WTC11 (cell line): ENCODE measurements at regions of chr12 and their contacts with region 1.

Region 1: GRCh38 chr12:47837190-47838171 is 17.8 kb upstream of the HDAC7 start:
- DNase-seq: peak; percentile 75
- ATAC-seq: peak; percentile 61
- H3K4me3 Mint-ChIP-seq: no peak overlapping the region
- H3K27ac Mint-ChIP-seq: no peak overlapping the region
- H3K4me1 Mint-ChIP-seq: peaks cover 19% of the 10 kb centered on the region
- H3K27me3 Mint-ChIP-seq: no peaks in the 10 kb centered on the region
- CTCF ChIP-seq: peak; percentile 96

Region 2: GRCh38 chr12:47576289-47576945 is 261.1 kb before region 1 on chr12:
- CTCF ChIA-PET with region 1: no interaction called
- POLR2A ChIA-PET with region 1: no interaction called
- DNase-seq: peak; percentile 39
- ATAC-seq: peak; percentile 63
- H3K4me3 Mint-ChIP-seq: no peak overlapping the region
- H3K27ac Mint-ChIP-seq: no peak overlapping the region
- H3K4me1 Mint-ChIP-seq: no peaks in the 10 kb centered on the region
- H3K27me3 Mint-ChIP-seq: no peaks in the 10 kb centered on the region
- CTCF ChIP-seq: no peak

Region 3: DNA sequence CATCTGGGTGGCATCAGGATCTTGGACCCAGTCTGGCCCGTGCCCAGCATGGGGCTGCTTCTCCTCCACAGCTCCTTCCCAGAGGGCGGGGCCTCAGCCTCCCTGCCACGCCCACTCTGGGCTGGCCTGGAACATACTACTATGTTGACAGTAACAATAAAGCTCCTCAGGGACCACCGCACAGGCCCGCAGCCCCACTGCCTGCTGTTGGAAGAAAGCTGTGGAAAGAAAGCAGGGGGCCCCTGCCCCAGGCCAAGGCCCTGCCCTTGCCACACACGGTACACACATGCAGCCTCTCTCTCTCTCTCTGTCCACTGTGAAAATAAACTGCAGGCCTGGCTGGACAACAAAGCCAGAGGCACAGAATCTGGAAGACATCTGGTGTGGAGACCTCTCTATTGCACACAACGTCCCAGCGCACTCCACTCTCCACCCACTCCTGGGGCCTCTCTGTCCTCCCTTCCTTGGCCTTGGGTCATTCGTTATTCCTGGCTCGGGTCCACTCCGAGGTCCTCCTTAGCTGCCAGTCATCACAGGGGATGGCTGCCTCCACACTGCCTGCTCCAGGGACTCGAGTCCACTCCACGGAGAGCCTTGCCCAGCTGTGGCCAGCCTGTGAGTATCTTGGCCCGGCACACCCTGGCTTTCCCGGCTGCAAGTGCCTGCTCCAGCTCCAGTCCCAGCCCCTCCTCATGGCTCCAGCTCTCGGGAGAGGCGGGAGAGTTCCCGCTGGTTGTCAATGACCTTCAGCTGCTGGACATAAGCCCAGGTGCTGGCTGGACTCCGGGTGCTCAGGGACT is 100.4 kb before region 1 on chr12:
- CTCF ChIA-PET with region 1: interaction called, 153 read pairs
- POLR2A ChIA-PET with region 1: no interaction called
- DNase-seq: peak; percentile 38
- ATAC-seq: peak; percentile 8; the same call in 1 of the 2 replicates
- H3K4me3 Mint-ChIP-seq: no peak overlapping the region
- H3K27ac Mint-ChIP-seq: no peak overlapping the region
- H3K4me1 Mint-ChIP-seq: peaks cover 26% of the 10 kb centered on the region
- H3K27me3 Mint-ChIP-seq: peaks cover 6% of the 10 kb centered on the region; the same call in 1 of the 2 replicates
- CTCF ChIP-seq: no peak

Region 4: GRCh38 chr12:47758834-47759690 is 78.4 kb before region 1 on chr12 and contains the start of gene RAPGEF3:
- CTCF ChIA-PET with region 1: interaction called, 41 read pairs
- POLR2A ChIA-PET with region 1: interaction called, 4 read pairs
- DNase-seq: peak; percentile 74
- ATAC-seq: peak; percentile 79
- H3K4me3 Mint-ChIP-seq: peak within 1 kb of the TSS; percentile 67
- H3K27ac Mint-ChIP-seq: no peak within 1 kb of the TSS
- H3K4me1 Mint-ChIP-seq: peaks cover 53% of the 10 kb centered on the region
- H3K27me3 Mint-ChIP-seq: no peaks in the 10 kb centered on the region; the same call in 1 of the 2 replicates
- CTCF ChIP-seq: no peak; the same call in 1 of the 2 replicates
- total RNA-seq, gene RAPGEF3: 9.0 to 13.3 TPM (median 9.7 TPM) in 3 replicates

Region 5: DNA sequence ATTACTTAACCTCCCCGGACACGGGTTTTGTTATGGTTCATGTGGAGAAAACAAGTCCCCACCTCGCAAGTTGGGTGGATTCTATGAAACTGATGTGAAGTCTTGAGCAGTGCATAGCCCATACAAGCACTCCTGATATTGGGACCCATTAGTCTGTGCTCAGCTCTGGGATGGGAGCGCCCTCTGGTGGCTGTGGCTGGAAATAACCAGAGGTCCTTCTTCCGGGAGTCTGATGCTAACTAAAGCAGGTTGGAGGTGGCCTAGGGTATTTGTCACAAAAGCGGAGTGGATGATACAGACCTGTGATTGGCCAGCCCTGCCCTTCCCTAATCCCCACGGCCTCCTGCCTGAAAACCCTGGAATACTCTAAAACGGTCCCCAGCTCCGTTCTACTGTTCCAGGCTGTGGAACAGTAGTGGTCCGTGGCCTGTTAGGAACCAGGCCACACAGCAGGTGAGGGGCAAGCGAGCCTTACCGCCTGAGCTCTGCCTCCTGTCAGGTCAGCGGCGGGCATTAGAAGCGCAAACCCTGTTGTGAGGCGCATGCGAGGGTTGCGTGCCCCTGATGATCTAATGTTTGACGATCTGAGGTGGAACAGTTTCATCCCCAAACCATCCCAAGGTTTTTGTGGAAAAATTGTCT is 58.1 kb before region 1 on chr12:
- CTCF ChIA-PET with region 1: interaction called, 110 read pairs
- POLR2A ChIA-PET with region 1: no interaction called
- DNase-seq: peak; percentile 97
- ATAC-seq: peak; percentile 85
- H3K4me3 Mint-ChIP-seq: peak overlapping the region; percentile 44
- H3K27ac Mint-ChIP-seq: peak overlapping the region; percentile 37; the same call in 1 of the 2 replicates
- H3K4me1 Mint-ChIP-seq: peaks cover 32% of the 10 kb centered on the region
- H3K27me3 Mint-ChIP-seq: peaks cover 11% of the 10 kb centered on the region
- CTCF ChIP-seq: peak; percentile 93

Region 6: DNA sequence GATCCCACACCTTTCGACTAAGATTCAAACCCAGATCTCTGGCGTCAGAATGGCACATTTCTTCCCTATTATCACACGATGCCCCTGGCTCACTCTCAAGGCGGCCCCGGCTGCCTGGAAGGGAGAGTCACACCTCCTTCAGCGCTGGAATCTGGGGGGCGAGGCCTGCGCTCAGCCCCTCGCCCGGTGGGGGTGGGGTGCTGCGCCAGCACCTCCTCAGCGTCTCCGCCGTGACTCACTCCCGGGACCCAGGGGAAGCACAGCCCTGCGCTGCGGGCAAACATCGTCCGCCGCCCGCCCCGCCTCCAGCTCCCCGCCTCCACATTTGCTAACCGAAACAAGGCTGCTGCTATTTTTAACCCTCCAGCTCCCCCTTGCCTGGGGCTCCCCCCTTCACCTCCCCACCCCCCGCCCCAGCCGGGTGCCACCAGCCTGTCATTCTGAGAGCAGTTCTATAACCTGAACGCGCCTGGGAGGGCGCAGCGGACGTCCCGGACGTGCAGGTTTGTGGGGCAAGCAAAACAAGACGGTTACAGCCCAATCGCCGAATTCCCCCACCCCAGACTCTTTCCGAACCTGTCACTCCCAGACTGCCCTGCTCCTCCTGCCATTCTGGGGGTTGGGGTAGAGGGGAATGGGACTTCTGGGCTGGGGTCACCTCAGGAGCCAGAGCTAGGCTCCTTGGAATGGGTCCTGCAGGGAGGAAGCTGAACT is 24.5 kb before region 1 on chr12:
- CTCF ChIA-PET with region 1: interaction called, 134 read pairs
- POLR2A ChIA-PET with region 1: interaction called, 6 read pairs
- DNase-seq: peak; percentile 87
- ATAC-seq: peak; percentile 68
- H3K4me3 Mint-ChIP-seq: peak overlapping the region; percentile 60
- H3K27ac Mint-ChIP-seq: peak overlapping the region; percentile 98
- H3K4me1 Mint-ChIP-seq: peaks cover 83% of the 10 kb centered on the region
- H3K27me3 Mint-ChIP-seq: no peaks in the 10 kb centered on the region
- CTCF ChIP-seq: no peak

Region 7: DNA sequence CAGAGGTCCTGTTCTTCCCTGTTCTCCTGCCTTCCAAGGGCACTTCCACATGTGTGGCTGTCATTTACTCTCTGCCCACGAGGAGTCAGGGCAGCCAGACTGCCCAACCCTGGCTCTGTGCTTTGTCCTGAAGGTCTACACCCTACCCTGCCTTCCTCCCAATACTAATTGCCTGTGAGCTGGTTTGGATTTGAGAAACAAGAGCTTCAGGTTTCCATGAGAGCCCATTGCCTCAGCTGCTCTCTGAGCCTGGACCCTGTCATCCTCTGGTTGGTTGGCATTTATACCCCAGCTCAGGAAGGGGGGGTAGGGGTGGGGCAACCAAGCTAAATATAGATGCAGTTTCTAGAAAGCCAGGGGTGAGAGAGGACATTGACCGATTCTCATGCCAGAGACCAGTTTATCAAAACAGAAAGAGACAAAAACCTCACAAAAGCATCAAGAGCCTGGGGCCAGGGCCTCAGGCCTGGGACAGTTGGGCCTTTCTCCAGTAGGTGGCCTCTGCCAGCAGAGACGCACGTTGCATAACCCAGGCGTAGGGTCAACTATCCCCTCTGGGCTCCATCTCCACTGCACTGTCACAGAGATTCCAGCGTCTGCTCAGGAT is 32.8 kb after region 1 on chr12:
- CTCF ChIA-PET with region 1: interaction called, 18 read pairs
- POLR2A ChIA-PET with region 1: no interaction called
- DNase-seq: peak; percentile 68
- ATAC-seq: peak; percentile 100
- H3K4me3 Mint-ChIP-seq: no peak overlapping the region
- H3K27ac Mint-ChIP-seq: no peak overlapping the region
- H3K4me1 Mint-ChIP-seq: peaks cover 8% of the 10 kb centered on the region
- H3K27me3 Mint-ChIP-seq: peaks cover 5% of the 10 kb centered on the region
- CTCF ChIP-seq: peak; percentile 24; the same call in 1 of the 2 replicates

Region 8: DNA sequence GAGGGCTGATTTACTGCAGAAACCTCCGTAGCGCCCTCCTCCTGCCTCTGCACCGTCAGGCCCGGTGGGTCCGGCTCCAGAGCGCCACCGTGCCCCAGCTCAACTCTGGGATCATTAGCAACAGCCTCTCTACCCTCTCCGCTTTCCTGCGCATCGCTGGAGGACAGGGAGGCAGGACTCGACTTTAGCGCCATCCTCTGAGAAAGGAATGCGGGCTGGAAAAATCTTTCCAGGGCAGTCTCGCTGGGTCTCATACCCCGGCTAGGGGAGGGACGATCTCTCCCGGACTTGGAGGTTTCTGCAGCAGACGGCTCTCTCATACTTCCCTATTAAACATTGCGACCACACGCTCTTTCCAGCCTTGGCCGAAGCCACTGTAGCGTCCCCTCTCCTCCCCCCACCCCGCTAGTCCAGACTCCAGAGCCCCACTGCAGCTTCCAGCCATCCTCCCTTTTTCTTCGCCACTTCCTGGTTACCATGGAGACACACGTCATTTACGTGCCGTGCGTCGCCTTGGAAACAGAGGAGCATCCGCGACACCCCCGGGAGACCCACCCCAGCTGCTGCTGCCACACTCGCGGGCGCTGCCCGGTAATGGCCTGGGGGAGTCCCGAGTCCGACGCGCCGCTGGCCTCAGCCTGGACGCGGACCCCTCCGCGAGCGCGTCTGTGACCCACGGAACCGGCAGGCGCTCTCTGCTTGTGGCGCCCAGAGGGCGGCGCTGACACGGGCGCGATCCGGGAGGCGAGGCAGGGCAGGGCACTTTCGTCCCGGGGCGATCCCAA is 345.8 kb after region 1 on chr12 and contains the start of gene CCDC184:
- CTCF ChIA-PET with region 1: interaction called, 10 read pairs
- POLR2A ChIA-PET with region 1: no interaction called
- DNase-seq: peak; percentile 74
- ATAC-seq: peak; percentile 85
- H3K4me3 Mint-ChIP-seq: peak within 1 kb of the TSS; percentile 81
- H3K27ac Mint-ChIP-seq: peak within 1 kb of the TSS; percentile 51
- H3K4me1 Mint-ChIP-seq: peaks cover 29% of the 10 kb centered on the region
- H3K27me3 Mint-ChIP-seq: peaks cover 99% of the 10 kb centered on the region
- CTCF ChIP-seq: no peak
- total RNA-seq, gene CCDC184: 1.4 to 1.6 TPM (median 1.5 TPM) in 3 replicates

Region 9: DNA sequence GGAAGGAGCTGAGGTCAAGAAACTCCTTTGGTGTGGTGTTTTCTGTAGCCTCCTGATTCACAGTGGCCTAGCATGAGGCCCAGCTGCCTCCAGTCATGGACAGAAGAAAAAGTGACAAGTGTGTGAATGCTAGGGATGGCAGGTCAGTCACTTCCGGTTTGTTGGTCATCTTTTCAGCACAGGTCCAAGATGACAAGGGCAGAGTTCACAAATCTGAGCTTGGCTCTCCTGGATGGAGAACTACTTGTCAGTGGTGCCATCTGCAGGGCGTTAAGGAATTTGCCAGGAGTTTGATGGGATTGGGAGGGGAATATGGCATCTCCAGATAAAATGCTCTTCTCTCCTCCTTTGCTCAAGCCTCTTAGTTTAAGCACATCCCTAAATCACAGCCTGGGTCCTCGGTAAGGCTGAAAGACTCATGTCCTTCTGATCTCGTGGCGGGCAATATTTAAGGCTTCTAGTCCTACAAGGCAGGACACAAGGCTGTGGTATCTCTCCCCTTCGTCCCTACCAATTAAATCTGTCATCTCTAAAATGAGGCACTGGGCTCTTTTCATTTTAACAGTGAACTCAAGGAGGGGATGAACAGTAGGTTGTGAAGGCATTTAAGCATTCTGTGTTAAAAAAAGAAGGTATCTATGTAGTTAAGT is 1283.7 kb after region 1 on chr12:
- CTCF ChIA-PET with region 1: no interaction called
- POLR2A ChIA-PET with region 1: no interaction called
- DNase-seq: peak; percentile 45
- ATAC-seq: peak; percentile 93
- H3K4me3 Mint-ChIP-seq: no peak overlapping the region
- H3K27ac Mint-ChIP-seq: no peak overlapping the region
- H3K4me1 Mint-ChIP-seq: no peaks in the 10 kb centered on the region
- H3K27me3 Mint-ChIP-seq: peaks cover 9% of the 10 kb centered on the region
- CTCF ChIP-seq: no peak